ENCODE measurements at regions of chr3 and their contacts with region 1.

Region 1: GRCh38 chr3:149120051-149120972 is 9.1 kb upstream of the HPS3 start:
- DNase-seq: peak; percentile 67
- CTCF ChIP-seq: peak; percentile 68

Region 2: DNA sequence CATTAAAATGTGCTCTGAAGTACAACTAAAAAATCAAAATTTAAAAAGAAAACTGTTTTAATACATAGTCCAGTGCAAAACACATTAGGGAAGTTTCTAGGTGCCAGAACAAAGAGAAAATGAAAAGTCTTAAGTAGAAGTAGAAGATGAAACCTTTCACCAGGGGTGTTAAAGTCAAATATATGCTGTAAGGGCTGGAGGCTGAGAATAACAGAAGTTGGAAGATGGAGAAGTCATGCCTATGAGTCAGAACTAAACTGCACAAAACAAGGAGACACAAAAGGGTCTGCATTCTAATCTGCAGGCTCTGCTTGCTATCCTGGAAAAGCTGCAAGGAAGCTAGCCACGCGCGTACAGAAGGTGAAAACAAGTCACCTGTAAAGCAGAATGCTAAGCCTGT is 341.4 kb before region 1 on chr3:
- CTCF ChIA-PET with region 1: no interaction called
- POLR2A ChIA-PET with region 1: no interaction called
- DNase-seq: no peak
- CTCF ChIP-seq: no peak

Region 3: DNA sequence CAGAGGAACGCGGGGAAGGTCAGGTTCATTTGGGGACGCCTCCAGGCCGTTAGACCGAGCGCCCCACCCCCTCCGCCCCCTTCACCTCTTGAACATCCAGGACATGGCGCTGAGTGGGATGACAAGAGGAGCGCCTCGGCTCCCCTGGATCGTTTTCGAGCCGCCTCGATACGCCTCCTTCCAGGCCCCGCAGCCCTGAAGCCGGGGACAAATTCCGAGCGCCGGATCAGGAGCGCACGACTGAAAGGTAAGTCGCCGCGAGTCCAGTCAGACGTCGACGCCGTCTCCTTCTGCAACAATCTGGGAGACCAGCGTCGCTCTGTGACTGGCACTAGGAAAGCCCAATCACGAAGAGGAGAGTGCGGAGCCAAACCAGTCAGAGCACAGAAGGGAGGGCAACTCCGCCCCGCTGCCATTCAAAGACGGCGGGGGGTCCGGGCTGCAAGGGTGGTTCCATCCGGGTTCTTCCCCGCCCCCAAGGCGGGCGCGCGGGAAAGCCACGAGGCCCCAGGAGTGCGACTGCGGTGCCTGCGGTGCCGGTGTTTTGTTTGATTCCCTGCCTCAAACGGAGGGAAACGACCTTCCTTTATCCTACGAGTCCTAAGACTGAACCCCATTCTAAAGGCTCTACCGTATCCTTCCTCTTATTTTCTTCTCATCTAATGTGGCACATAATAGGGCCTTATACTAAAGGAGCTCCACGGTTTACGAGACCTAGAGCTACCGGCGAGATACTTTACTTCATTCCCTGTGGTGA is 33.9 kb before region 1 on chr3 and contains the start of gene HLTF:
- CTCF ChIA-PET with region 1: interaction called, 12 read pairs
- POLR2A ChIA-PET with region 1: no interaction called
- DNase-seq: peak; percentile 96
- CTCF ChIP-seq: no peak

Region 4: GRCh38 chr3:149104516-149104915 is 15.8 kb before region 1 on chr3:
- CTCF ChIA-PET with region 1: interaction called, 12 read pairs
- POLR2A ChIA-PET with region 1: no interaction called
- DNase-seq: no peak
- CTCF ChIP-seq: no peak

Region 5: GRCh38 chr3:149245738-149246451 is 125.6 kb after region 1 on chr3:
- CTCF ChIA-PET with region 1: interaction called, 22 read pairs
- POLR2A ChIA-PET with region 1: no interaction called
- DNase-seq: peak; percentile 42
- CTCF ChIP-seq: no peak

Region 6: GRCh38 chr3:149267565-149267964 is 147.3 kb after region 1 on chr3:
- CTCF ChIA-PET with region 1: interaction called, 154 read pairs
- POLR2A ChIA-PET with region 1: no interaction called
- DNase-seq: no peak
- CTCF ChIP-seq: no peak